Activated CD4-positive, alpha-beta T cell treated with anti-CD3 and anti-CD28 coated beads, Interleukin-2, amount 10 ng/mL, durations not matched to agents 24 days and 14 days (primary cell): ENCODE measurements at regions of chr1 and their contacts with region 1.

Region 1: GRCh38 chr1:33295450-33296081 is 25.3 kb downstream of the A3GALT2 start:
- DNase-seq: peak; percentile 96
- H3K4me3 Mint-ChIP-seq: no peak overlapping the region
- H3K27ac Mint-ChIP-seq: peak overlapping the region; percentile 12
- H3K4me1 Mint-ChIP-seq: peaks cover 15% of the 10 kb centered on the region
- H3K27me3 Mint-ChIP-seq: no peaks in the 10 kb centered on the region

Region 2: GRCh38 chr1:33367485-33368405 is 72.2 kb after region 1 on chr1:
- intact Hi-C with region 1: loop called (anchors 1 kb)
- DNase-seq: peak; percentile 95
- H3K4me3 Mint-ChIP-seq: no peak overlapping the region
- H3K27ac Mint-ChIP-seq: no peak overlapping the region
- H3K4me1 Mint-ChIP-seq: peaks cover 2% of the 10 kb centered on the region
- H3K27me3 Mint-ChIP-seq: no peaks in the 10 kb centered on the region

Region 3: DNA sequence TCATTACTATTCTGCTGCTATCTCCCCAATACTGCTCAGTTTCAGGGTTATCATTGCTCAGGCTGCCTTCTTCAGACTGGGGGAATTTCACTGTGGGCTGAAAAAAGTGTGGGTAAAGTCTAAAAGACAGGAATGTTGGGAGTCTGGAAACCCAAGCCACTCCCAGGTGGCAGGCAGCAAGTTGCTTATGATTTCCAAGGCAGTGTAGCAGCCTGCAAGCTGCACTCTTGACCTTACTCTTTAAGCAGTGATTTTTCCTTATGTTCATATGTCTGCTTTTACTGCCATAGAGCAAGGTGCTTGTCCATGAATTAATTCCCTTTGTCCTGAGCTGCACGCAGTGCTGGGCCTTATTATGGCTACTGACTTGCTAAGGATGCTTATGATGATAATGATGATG is 82.2 kb after region 1 on chr1:
- intact Hi-C with region 1: no loop called
- DNase-seq: no peak
- H3K4me3 Mint-ChIP-seq: no peak overlapping the region
- H3K27ac Mint-ChIP-seq: no peak overlapping the region
- H3K4me1 Mint-ChIP-seq: peaks cover 12% of the 10 kb centered on the region
- H3K27me3 Mint-ChIP-seq: peaks cover 25% of the 10 kb centered on the region

Region 4: GRCh38 chr1:33455539-33456501 is 160.3 kb after region 1 on chr1:
- intact Hi-C with region 1: loop called (anchors 5 kb)
- DNase-seq: peak; percentile 79
- H3K4me3 Mint-ChIP-seq: no peak overlapping the region
- H3K27ac Mint-ChIP-seq: no peak overlapping the region
- H3K4me1 Mint-ChIP-seq: peaks cover 3% of the 10 kb centered on the region
- H3K27me3 Mint-ChIP-seq: peaks cover 23% of the 10 kb centered on the region